GM10248 (cell line): ENCODE measurements at regions of chr12 and their contacts with region 1.

Region 1: GRCh38 chr12:116420227-116420880 is 138.8 kb upstream of the MAP1LC3B2 start:
- DNase-seq: no peak
- CTCF ChIP-seq: no peak

Region 2: DNA sequence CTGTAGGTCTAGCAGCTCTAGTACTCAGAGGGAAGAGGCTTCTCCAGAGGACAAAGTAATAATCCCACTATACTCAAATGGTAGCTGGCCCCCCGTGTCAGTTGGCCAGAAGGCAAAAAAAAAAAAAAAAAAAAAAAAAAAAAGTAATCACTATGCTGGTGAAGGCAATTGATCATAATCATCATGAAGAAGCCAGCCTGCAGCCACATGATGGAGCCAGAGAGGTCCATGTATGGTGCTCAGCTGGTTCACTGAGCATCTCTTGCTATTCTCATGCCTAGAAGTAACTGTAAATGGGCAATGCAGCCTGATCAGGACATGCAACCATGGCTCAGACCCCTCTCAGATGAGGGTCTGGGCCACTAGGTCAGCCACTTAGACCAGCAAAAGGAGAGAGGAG is 521.7 kb before region 1 on chr12:
- CTCF ChIA-PET with region 1: no interaction called
- POLR2A ChIA-PET with region 1: interaction called, 11 read pairs
- DNase-seq: no peak
- CTCF ChIP-seq: peak; percentile 18

Region 3: GRCh38 chr12:116369921-116370404 is 50.4 kb before region 1 on chr12:
- CTCF ChIA-PET with region 1: no interaction called
- POLR2A ChIA-PET with region 1: no interaction called
- DNase-seq: no peak
- CTCF ChIP-seq: no peak

Region 4: DNA sequence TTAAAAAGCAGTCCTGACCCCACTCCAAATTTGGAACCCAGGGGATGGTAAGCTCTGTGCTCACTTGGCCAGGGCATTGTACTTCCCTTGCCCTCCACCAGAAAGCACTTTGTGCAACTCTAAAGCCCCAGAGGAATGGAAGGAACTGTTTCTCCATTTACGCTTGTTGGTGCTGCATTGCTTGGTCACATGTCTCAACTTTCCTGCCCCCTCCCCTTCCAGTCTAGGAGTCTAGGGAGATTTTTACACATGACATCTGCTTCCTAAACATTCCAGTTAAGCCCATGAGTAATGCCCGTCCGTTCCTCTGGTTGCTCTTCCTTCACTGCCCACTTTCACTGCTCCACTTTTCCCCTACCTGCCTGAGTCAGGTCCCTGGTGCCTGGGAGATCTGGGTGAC is 46.2 kb after region 1 on chr12:
- CTCF ChIA-PET with region 1: no interaction called
- POLR2A ChIA-PET with region 1: no interaction called
- DNase-seq: no peak
- CTCF ChIP-seq: no peak

Region 5: DNA sequence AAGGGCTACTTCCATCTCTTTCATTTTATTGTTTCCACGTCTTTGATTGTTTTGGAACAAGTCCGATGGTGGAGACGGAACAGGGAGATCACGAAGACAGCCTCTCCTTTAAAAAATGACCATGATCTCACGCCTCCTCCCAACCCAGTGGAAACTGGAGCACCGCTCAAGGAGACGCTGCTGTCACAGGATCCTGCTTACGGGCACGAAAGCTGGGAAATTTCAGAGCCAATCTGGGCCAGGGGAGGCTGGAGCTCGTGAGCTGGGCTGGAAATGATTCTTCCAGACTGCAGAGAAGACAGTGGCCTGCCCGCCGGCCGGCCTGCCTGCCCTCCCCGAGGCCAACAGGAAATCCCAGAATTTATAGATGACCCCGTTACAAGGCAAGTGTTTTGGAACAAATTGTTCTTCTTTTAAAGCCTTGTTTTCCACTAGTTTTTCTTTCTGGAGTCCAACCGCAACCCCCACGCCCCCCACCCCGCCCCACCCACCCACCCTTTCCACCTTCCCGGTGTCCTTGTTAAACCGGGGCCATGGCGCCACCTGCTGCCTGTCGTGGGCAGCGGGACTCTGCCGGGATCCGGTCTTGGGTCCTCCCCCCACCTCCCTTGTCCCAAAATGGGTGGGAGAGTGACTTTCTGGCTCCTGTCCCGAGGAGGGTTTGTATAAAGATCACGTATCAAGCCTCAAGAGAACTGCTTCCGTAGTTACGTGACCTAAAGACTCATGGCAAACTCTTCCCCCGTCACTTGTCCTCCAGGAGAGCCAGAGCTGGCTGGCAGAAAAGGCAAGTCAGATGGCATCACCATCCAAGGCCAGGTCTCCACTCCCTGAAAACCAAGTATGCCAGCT is 179.2 kb after region 1 on chr12:
- CTCF ChIA-PET with region 1: no interaction called
- POLR2A ChIA-PET with region 1: no interaction called
- DNase-seq: peak; percentile 73
- CTCF ChIP-seq: peak; percentile 69